Lower leg skin (tissue), 4 donors: ENCODE measurements at regions of chrX and their contacts with region 1.

Region 1: DNA sequence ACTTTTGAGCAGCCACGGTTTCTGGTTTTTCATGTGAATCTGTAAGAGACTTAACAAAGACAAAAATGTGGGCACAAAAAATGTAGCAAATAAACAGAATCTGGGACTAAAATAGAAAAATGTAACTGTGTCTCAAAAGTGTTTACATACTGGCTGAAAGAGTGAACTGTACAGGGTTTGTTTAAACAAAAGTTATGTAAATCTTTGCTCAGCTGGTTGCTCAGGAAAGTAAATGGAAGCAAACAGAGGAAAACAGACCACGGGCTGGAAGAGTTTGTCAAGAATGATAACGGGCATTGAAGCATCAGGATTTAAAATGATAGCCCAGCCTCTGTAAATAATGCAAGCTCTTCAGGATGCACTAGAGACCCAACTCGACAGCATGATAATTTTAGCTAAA is 921.8 kb upstream of the FTHL17 start:
- DNase-seq: no peak
- H3K4me3 ChIP-seq: no peak overlapping the region
- CTCF ChIP-seq: no peak
- POLR2A ChIP-seq: no peak

Region 2: DNA sequence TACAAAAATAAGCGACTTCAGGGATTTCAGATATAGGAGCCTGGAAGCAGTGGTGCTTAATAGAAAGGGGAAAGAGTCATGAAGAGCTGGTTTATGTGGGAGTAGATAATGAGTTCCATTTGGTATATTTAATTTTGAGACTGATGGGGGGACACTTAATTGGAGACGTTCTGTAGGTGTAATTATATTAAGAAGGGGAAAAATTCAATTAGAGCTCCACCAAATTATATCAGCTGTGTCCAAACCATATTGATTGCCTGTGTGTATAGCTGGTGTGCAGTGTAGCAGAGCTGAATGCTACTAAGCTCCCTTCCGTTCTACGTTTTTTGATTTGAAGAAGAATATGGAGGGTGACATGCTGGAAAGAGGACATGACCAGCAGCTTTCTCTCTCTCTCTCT is 935.4 kb after region 1 on chrX:
- intact Hi-C with region 1: loop called (anchors 5 kb)
- DNase-seq: no peak
- H3K4me3 ChIP-seq: no peak overlapping the region
- CTCF ChIP-seq: no peak
- POLR2A ChIP-seq: no peak